Motor neuron (in vitro differentiated cells): ENCODE measurements at regions of chr20 and their contacts with region 1.

Region 1: GRCh38 chr20:33647603-33648395 is 14.3 kb upstream of the C20orf144 start:
- ATAC-seq: peak in 5 of 8 experiments; percentile 2 to 62 (median 14)
- H3K4me3 ChIP-seq: no peak overlapping the region
- H3K27ac ChIP-seq: no peak overlapping the region
- H3K4me1 ChIP-seq: peaks cover 17 to 21% of the 10 kb centered on the region in 2 donors

Region 2: DNA sequence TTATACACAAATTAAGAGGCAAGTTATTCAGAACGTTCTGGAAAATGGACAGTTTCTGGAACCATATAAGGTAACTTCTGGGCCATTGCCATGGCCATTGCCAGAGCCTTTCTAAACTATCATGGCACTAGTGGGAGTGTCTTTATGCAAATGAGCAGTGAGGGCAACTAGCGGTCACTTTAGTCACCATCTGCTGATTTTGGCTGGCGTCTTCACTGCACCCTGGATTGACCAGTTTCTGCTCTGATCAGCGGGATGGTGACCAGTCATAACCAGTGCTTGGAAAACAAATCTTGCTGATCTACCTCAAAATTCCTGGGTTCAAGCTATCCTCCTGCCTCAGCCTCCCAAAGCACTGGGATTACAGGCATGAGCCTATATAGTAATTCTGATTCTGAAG is 196.9 kb before region 1 on chr20:
- in situ Hi-C with region 1: loop called in 3 of 9 experiments (anchors 10 kb)
- ATAC-seq: peak in 2 of 8 experiments; percentile 29 to 35
- H3K4me3 ChIP-seq: no peak overlapping the region
- H3K27ac ChIP-seq: no peak overlapping the region
- H3K4me1 ChIP-seq: no peaks in the 10 kb centered on the region

Region 3: DNA sequence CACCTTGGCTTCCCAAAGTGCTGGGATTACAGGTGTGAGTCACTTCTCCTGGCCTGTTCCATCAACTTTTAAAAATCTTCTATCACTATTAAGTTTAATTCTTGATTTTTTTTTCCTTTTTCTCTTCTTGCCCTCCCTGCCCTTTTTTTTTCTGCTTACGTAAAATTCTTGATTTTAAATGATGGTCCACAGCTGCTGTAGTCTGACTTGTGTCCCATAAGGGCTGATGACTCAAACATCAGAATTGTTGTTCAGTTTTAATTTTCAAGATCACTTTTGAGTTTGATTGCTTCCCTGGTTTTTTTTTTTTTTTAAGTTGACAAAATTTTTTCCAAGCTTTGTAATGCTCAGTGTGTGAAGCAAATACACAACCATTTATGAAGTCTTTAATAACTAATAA is 96.0 kb before region 1 on chr20:
- in situ Hi-C with region 1: no loop called
- ATAC-seq: no peak
- H3K4me3 ChIP-seq: no peak overlapping the region
- H3K27ac ChIP-seq: no peak overlapping the region
- H3K4me1 ChIP-seq: peaks cover 0 to 3% of the 10 kb centered on the region in 2 donors

Region 4: GRCh38 chr20:34282041-34282440 is 634.2 kb after region 1 on chr20:
- in situ Hi-C with region 1: no loop called
- ATAC-seq: no peak
- H3K4me3 ChIP-seq: no peak overlapping the region
- H3K27ac ChIP-seq: no peak overlapping the region
- H3K4me1 ChIP-seq: no peaks in the 10 kb centered on the region